Right ventricle myocardium superior (tissue), 1 donor: ENCODE measurements at regions of chr17 and their contacts with region 1.

Region 1: DNA sequence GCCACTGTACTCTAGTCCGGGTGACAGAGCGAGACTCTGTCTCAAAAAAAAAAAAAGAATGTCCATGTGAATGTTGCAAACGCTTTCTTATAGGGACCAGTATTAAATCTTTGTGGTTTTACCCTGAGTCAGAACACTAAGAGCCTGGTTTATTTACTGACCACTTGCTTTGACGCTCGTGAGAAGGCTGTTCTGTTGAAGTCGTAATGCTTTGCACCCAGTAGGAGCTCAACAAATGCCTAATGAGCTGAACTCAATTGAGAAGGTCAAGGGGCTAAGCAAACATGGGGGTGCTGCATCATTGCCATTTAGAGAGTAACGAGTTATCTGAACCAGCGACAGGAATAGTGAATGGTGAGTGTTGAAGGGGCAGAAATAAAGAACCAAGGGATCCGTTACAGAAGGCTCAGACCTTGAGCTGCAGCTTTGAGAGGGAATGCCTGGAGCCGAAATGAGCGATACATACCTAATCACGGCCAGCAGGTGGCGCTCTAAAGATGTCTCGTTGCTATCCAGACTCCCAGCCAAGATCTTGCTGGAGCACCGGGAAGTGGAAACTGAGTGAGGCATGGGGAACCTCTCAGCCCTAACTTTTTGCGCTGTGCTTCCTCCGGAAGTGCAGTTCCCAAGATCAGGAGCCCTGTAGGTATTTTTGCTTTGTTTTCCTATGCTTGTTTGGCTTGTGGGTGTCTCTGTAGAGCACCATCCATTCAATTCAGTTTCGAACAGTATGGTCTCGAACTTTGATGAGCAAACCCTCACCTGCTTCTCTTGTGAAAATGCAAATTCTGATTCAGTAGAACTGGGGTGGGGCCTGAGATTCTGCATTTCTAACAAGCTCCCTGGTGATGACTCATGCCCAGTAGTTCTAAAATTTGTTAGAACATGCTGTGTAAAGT is 12.6 kb upstream of the RNF222 start:
- DNase-seq: peak; percentile 91
- ATAC-seq: peak; percentile 97

Region 2: DNA sequence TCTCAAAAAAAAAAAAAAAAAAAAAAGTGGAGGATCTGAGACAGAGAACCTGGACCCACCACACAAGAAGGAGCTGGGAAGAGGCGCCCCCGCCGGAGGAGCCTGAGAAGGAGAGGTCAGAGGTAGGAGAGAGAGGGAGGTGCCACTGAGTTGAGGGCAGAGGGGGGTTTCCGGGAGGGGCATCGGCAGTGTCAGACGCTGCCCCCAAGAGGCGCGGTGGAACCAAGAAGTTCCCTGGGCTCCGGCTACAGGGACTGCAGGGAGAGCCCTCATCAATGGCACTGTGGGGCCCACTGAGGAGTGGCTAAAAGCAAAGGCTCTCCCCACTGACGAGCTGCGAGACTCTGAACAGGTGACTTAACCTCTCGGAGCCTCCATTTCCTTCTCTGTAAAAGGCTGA is 330.3 kb after region 1 on chr17:
- intact Hi-C with region 1: loop called (anchors 5 kb)
- DNase-seq: no peak
- ATAC-seq: no peak

Region 3: GRCh38 chr17:8785547-8786413 is 375.6 kb after region 1 on chr17:
- intact Hi-C with region 1: loop called (anchors 10 kb)
- DNase-seq: peak; percentile 84
- ATAC-seq: peak; percentile 92